ENCODE measurements at regions of chr5 and their contacts with region 1.

Region 1: GRCh38 chr5:141992349-141992963 is 20.4 kb downstream of the GNPDA1 start:
- DNase-seq: no peak
- ATAC-seq: peak; percentile 81
- H3K4me3 ChIP-seq: no peak overlapping the region
- H3K27ac ChIP-seq: no peak overlapping the region
- H3K4me1 ChIP-seq: no peaks in the 10 kb centered on the region
- H3K27me3 ChIP-seq: no peaks in the 10 kb centered on the region
- CTCF ChIP-seq: peak; percentile 82

Region 2: GRCh38 chr5:141940695-141941271 is 51.7 kb before region 1 on chr5:
- intact Hi-C with region 1: no loop called
- DNase-seq: no peak
- ATAC-seq: peak; percentile 60
- H3K4me3 ChIP-seq: no peak overlapping the region
- H3K27ac ChIP-seq: no peak overlapping the region
- H3K4me1 ChIP-seq: peaks cover 21% of the 10 kb centered on the region
- H3K27me3 ChIP-seq: no peaks in the 10 kb centered on the region
- CTCF ChIP-seq: peak; percentile 13

Region 3: GRCh38 chr5:142143878-142144277 is 151.4 kb after region 1 on chr5:
- intact Hi-C with region 1: loop called (anchors 5 kb)
- DNase-seq: no peak
- ATAC-seq: peak; percentile 51
- H3K4me3 ChIP-seq: no peak overlapping the region
- H3K27ac ChIP-seq: no peak overlapping the region
- H3K4me1 ChIP-seq: no peaks in the 10 kb centered on the region
- H3K27me3 ChIP-seq: no peaks in the 10 kb centered on the region
- CTCF ChIP-seq: peak; percentile 57

Measured in upper lobe of right lung (tissue), 1 donor.